ENCODE measurements at regions of chr9 and their contacts with region 1.

Region 1: DNA sequence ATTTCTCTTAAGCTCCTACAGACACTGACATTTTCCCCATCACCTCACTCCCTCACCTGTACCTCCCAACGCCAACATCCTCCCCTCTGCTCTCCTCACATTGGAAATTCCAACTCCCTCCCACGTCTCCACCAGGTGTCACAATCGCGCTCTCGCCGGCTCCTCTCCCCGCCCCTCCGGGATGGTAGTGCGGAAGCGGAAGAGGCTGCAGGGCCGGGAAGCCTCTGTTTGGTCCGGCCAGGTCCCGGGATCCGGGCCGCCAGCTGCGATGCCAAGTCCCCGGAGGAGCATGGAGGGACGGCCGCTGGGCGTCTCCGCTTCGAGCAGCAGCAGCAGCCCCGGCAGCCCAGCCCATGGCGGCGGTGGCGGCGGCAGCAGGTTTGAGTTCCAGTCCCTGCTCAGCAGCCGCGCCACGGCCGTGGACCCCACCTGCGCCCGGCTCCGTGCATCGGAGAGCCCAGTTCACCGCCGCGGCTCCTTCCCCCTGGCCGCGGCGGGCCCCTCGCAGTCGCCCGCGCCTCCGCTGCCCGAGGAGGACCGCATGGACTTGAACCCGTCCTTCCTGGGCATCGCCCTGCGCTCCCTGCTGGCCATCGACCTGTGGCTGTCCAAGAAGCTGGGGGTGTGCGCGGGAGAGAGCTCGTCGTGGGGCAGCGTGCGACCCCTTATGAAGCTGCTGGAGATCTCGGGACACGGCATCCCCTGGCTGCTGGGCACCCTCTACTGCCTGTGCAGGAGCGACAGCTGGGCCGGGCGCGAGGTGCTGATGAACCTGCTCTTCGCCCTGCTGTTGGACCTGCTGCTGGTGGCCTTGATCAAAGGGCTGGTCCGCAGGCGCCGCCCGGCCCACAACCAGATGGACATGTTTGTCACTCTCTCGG is at the start of gene PLPP6:
- DNase-seq: peak; percentile 89 to 91
- ATAC-seq: peak; percentile 95 to 96
- H3K4me3 ChIP-seq: peak within 1 kb of the TSS; percentile 84
- H3K27ac ChIP-seq: peak within 1 kb of the TSS; percentile 92 to 99
- H3K4me1 ChIP-seq: peaks cover 49% of the 10 kb centered on the region
- CTCF ChIP-seq: peak; percentile 58
- EP300 ChIP-seq: no peak
- POLR2A ChIP-seq: peak; percentile 82
- RAD21 ChIP-seq: peak; percentile 66 to 73
- polyA plus RNA-seq, gene PLPP6: 13.2 and 13.5 TPM in 2 replicates

Region 2: GRCh38 chr9:4197548-4197947 is 464.8 kb before region 1 on chr9:
- CTCF ChIA-PET with region 1: no interaction called
- POLR2A ChIA-PET with region 1: no interaction called
- DNase-seq: peak in 1 of 2 experiments; percentile 55
- ATAC-seq: peak in 1 of 2 experiments; percentile 43; a peak in 3 of 6 replicates
- H3K4me3 ChIP-seq: no peak overlapping the region
- H3K27ac ChIP-seq: no peak overlapping the region
- H3K4me1 ChIP-seq: no peaks in the 10 kb centered on the region
- CTCF ChIP-seq: peak; percentile 12; the same call in 1 of the 3 replicates
- EP300 ChIP-seq: no peak
- POLR2A ChIP-seq: no peak
- RAD21 ChIP-seq: peak in 1 of 2 experiments; percentile 51; a peak in 2 of 5 replicates

Region 3: GRCh38 chr9:4520055-4520454 is 142.3 kb before region 1 on chr9:
- CTCF ChIA-PET with region 1: no interaction called
- POLR2A ChIA-PET with region 1: no interaction called
- DNase-seq: no peak
- ATAC-seq: no peak
- H3K4me3 ChIP-seq: no peak overlapping the region
- H3K27ac ChIP-seq: no peak overlapping the region
- H3K4me1 ChIP-seq: no peaks in the 10 kb centered on the region
- CTCF ChIP-seq: no peak
- EP300 ChIP-seq: no peak
- POLR2A ChIP-seq: no peak
- RAD21 ChIP-seq: no peak

Region 4: GRCh38 chr9:4740638-4741364 is 78.5 kb after region 1 on chr9 and contains the start of gene AK3:
- CTCF ChIA-PET with region 1: interaction called, 12 read pairs
- POLR2A ChIA-PET with region 1: interaction called, 10 read pairs
- DNase-seq: peak; percentile 87 to 89
- ATAC-seq: peak; percentile 92 to 95
- H3K4me3 ChIP-seq: peak within 1 kb of the TSS; percentile 88
- H3K27ac ChIP-seq: peak within 1 kb of the TSS; percentile 88 to 92
- H3K4me1 ChIP-seq: peaks cover 24% of the 10 kb centered on the region
- CTCF ChIP-seq: peak; percentile 29; the same call in 2 of the 3 replicates
- EP300 ChIP-seq: no peak
- POLR2A ChIP-seq: peak; percentile 89
- RAD21 ChIP-seq: peak; percentile 21 to 52; a peak in 3 of 5 replicates
- polyA plus RNA-seq, gene AK3: 70.4 and 83.0 TPM in 2 replicates

Region 5: GRCh38 chr9:4769321-4770080 is 107.2 kb after region 1 on chr9:
- CTCF ChIA-PET with region 1: no interaction called
- POLR2A ChIA-PET with region 1: no interaction called
- DNase-seq: no peak
- ATAC-seq: peak; percentile 65 to 66; a peak in 5 of 6 replicates
- H3K4me3 ChIP-seq: no peak overlapping the region
- H3K27ac ChIP-seq: no peak overlapping the region
- H3K4me1 ChIP-seq: no peaks in the 10 kb centered on the region
- CTCF ChIP-seq: no peak
- EP300 ChIP-seq: no peak
- POLR2A ChIP-seq: no peak
- RAD21 ChIP-seq: no peak

Measured in A549 (cell line).